ENCODE measurements at regions of chr6 and their contacts with region 1.

Region 1: GRCh38 chr6:12962987-12963386 is 246.4 kb downstream of the PHACTR1 start:
- DNase-seq: no peak
- ATAC-seq: peak; percentile 29

Region 2: DNA sequence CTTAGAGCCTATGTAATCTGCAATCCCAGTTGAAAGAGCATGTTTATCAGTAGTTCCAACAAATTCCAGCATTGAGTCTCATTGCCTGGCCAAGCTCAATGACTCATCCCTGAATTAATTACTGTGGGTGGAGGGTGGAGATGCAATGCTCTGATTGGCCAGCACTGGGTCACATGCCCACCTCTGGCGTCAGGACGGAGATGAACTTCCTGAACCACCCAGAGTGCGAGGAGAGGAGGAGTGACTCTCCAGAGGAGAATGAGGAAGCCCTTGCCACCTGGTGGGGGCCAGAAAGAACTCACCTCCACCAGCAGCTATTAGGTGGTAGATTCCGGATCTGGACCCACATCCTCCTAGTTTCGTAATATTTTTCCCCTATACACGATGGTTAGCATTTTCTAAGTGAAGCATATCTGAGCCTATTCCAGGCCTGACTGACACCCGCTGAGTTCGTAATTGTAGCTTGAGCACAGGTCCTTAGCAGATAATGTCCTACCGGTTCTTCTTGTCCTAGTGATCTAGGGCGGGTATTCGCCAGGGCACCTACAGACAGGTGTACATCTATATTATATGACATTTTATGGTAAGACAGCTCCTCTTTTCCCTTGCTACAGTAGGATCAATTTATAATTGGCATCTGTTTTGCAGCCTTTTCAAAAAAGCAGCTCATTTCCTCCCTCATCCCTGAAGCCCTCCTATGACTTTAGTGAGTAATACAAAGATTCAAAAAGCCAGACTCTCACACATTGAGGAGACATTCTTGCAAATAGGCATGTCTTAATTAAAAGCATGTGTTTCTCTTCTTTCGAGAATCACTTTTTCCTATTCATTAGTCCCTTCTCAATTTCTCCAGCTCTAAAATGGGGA is 81.6 kb after region 1 on chr6:
- intact Hi-C with region 1: no loop called
- DNase-seq: no peak
- ATAC-seq: no peak

Region 3: DNA sequence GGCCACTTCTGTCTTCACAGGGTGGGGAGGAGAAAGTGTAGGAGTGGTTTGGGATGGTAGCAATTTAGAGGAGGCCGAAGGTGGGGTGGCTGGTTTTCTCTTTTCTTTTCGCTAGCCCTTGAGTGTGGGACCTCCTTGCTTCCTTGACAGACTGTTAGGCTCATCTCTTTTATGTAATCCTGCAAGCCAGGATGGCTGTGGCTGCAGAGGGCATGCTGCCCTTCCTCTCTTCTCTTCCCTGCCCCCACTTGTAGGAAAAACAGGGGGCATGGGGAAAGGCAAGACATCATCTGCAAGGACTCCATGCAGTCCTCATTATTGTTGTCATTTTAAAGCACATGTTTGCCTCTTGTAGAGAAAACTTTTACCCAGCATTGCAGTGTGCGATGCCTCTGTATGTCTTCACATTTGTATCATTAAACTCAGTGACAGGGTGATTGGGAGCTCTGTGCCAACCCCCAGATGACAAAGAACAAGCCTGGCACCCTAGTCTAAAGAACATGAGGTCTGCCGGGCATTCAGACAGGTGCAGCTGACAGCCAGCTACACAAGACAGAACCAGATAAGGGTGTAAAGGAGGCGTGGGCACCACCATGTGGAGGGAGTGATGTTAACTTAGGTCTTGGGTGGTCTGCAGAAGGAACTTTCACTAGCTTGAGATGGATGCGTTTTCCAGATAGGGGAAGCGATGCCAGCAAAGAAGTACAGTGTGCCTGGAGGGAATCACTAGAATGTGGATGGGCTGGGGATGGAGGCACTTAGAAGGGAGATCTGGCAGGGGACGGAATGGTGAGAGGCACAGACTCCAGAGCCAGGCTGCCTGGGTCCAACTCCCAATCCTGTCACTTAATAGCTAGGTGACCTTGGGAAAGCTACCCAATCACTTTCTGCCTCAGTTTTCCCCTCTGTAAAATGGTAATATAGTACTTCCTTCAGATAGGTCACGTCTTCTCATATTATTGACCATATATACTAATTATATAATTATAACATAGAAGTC is 157.8 kb after region 1 on chr6:
- intact Hi-C with region 1: loop called (anchors 5 kb)
- DNase-seq: no peak
- ATAC-seq: peak; percentile 94

Measured in Right ventricle myocardium inferior (tissue), 1 donor.